Activated T-helper 1 cell treated with anti-CD3 and anti-CD28 coated beads, Interleukin-12 subunit alpha, Interleukin-12 subunit beta, Interleukin-2, Interleukin-4 antibody, amounts not matched to agents 30 ng/mL and 10 ng/mL and 1 ng/mL, durations not matched to agents 14 hours and 24 hours and 36 hours (primary cell): ENCODE measurements at regions of chr11 and their contacts with region 1.

Region 1: GRCh38 chr11:44309483-44310205 is at the start of gene ALX4:
- DNase-seq: no peak
- H3K4me3 Mint-ChIP-seq: peak within 1 kb of the TSS; percentile 13
- H3K27ac Mint-ChIP-seq: peak within 1 kb of the TSS; percentile 74
- H3K4me1 Mint-ChIP-seq: peaks cover 29% of the 10 kb centered on the region
- H3K27me3 Mint-ChIP-seq: peaks cover 93% of the 10 kb centered on the region
- total RNA-seq, gene ALX4: not detected in 2 replicates

Region 2: GRCh38 chr11:43579171-43579918 is 730.3 kb before region 1 on chr11:
- intact Hi-C with region 1: loop called (anchors 2 kb)
- DNase-seq: no peak
- H3K4me3 Mint-ChIP-seq: peak overlapping the region; percentile 39
- H3K27ac Mint-ChIP-seq: peak overlapping the region; percentile 23
- H3K4me1 Mint-ChIP-seq: peaks cover 12% of the 10 kb centered on the region
- H3K27me3 Mint-ChIP-seq: peaks cover 83% of the 10 kb centered on the region

Region 3: DNA sequence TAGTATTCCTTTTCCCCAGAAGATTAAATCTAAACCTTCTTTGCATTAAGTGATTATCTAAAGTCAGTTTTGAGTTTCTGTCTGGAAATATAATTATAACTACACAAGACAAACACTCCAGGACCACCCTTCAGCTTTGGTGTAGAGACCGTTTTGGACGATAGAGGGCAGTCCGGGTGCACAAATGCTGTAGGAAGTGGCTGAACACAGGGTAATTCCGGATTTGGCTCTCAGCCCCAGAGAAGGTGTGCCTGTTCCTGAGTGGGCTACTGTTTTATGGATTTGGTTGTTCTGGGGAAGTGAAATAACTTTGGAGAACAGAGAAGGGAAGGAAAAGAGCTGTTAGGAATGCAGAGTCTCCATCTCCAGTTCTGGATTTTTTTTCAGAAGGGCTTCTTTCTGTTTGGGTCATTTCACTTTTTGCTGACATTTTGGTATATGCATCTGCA is 199.4 kb before region 1 on chr11:
- intact Hi-C with region 1: loop called (anchors 2 kb)
- DNase-seq: peak; percentile 45
- H3K4me3 Mint-ChIP-seq: no peak overlapping the region
- H3K27ac Mint-ChIP-seq: no peak overlapping the region
- H3K4me1 Mint-ChIP-seq: peaks cover 19% of the 10 kb centered on the region
- H3K27me3 Mint-ChIP-seq: no peaks in the 10 kb centered on the region